HCT116 (cell line): ENCODE measurements at regions of chrX and their contacts with region 1.

Region 1: DNA sequence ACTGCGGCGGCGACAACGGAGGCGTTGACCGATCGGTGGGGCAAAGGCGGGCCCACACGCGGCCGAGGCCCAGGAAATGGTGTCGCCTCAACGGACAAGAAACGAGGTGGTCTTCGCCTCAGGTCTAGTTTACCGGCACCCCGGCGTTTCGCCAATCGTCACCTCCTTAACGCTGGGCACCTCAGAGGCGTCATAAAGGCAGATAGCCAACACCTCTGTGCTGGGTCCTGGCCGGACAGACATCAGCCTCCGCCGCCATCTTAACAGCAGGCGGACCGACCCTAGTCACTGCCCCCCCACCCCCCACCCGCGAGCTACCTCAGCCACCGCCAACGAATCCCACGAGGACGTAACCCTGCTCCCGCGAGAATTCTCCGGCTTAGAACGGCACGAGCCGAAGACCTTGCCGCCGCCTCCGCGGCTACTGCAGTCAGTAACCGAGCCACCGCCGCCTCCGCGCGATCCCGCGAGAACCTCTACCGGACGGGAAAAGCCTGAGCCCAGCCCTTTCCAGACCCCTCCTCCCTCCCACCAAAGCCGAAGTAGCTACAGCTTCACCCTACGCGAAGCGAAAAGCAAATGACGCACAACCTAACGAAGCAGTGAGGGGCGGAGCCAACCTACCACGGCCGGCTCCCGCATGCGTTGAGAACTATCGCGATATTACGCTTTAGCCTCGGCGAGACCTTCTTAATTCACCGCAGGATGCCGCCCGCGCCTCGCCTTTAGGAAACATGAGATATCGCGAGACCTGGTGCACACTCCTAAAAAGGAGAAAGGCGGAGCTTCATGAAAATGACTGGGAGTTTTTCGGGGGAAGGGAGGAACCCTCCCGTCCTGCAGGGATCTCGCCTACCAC is 2.7 kb downstream of the HUWE1 start:
- DNase-seq: peak; percentile 96
- ATAC-seq: peak; percentile 77
- H3K4me3 ChIP-seq: peak overlapping the region; percentile 66 to 77
- H3K27ac ChIP-seq: peak overlapping the region; percentile 93
- H3K4me1 ChIP-seq: peaks cover 3 to 22% of the 10 kb centered on the region in 2 experiments; a peak in 3 of 4 replicates
- H3K27me3 ChIP-seq: no peaks in the 10 kb centered on the region
- CTCF ChIP-seq: no peak
- POLR2A ChIP-seq: no peak
- RAD21 ChIP-seq: no peak

Region 2: GRCh38 chrX:53616946-53617345 is 66.8 kb before region 1 on chrX:
- CTCF ChIA-PET with region 1: no interaction called
- POLR2A ChIA-PET with region 1: no interaction called
- RAD21 ChIA-PET with region 1: no interaction called
- intact Hi-C with region 1: no loop called
- DNase-seq: no peak
- ATAC-seq: no peak
- H3K4me3 ChIP-seq: no peak overlapping the region
- H3K27ac ChIP-seq: no peak overlapping the region
- H3K4me1 ChIP-seq: no peaks in the 10 kb centered on the region
- H3K27me3 ChIP-seq: no peaks in the 10 kb centered on the region
- CTCF ChIP-seq: no peak
- POLR2A ChIP-seq: no peak
- RAD21 ChIP-seq: no peak

Region 3: GRCh38 chrX:53831662-53832635 is 148.2 kb after region 1 on chrX:
- CTCF ChIA-PET with region 1: no interaction called
- POLR2A ChIA-PET with region 1: interaction called, 3 read pairs
- RAD21 ChIA-PET with region 1: no interaction called
- intact Hi-C with region 1: loop called (anchors 2 kb)
- DNase-seq: peak; percentile 28
- ATAC-seq: peak; percentile 98
- H3K4me3 ChIP-seq: no peak overlapping the region
- H3K27ac ChIP-seq: no peak overlapping the region
- H3K4me1 ChIP-seq: no peaks in the 10 kb centered on the region
- H3K27me3 ChIP-seq: no peaks in the 10 kb centered on the region
- CTCF ChIP-seq: peak; percentile 40 to 62 (median 50); a peak in 5 of 6 replicates
- POLR2A ChIP-seq: no peak
- RAD21 ChIP-seq: peak; percentile 70

Region 4: DNA sequence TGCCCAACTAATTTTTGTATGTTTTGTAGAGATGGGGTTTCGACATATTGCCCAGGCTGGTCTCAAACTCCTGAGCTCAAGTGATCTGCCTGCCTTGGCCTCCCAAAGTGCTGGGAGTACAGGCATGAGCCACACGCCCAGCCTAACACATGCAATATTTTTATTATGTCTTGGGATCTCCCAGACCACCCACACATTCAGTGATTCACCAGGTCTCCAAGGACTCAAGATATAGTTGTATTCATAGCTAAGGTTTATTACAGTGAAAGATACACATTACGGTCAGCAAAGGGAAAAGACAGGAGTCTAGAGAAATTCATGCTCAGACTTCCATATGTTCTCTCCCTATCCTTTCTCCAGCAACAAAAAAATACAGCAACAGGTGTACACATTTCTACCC is 524.7 kb after region 1 on chrX:
- CTCF ChIA-PET with region 1: no interaction called
- POLR2A ChIA-PET with region 1: no interaction called
- RAD21 ChIA-PET with region 1: no interaction called
- intact Hi-C with region 1: no loop called
- DNase-seq: no peak
- ATAC-seq: no peak
- H3K4me3 ChIP-seq: no peak overlapping the region
- H3K27ac ChIP-seq: no peak overlapping the region
- H3K4me1 ChIP-seq: no peaks in the 10 kb centered on the region
- H3K27me3 ChIP-seq: no peaks in the 10 kb centered on the region
- CTCF ChIP-seq: no peak
- POLR2A ChIP-seq: no peak
- RAD21 ChIP-seq: no peak